CD4-positive, alpha-beta T cell (primary cell): ENCODE measurements at regions of chr6 and their contacts with region 1.

Region 1: DNA sequence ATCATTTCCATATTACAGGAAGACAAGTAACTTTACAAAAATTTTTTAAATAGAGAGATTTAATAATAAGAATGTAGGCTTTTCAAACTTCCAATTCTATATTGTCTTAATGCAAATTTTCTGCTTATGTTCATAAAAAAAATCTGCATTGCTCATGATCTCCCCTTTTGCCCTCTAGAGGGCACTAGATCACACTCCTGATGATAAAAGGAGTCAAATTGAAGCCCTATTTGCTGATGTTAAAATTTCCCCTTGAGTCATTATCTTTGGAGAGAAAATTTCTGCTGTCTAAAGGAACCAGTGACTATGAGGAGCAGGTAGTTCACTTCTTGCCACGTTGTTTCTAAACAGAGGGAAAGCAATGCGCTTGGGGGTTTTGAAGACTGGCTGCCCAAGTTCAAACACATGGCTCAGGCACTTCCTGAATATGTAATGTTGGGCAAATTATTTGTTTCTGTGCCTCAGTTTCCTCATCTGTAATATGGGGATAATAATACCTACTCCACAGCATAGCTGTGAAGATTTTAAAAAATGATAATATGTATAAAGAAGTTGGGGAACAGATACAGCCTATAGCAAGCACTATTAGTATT is 874.2 kb downstream of the TFAP2A start:
- DNase-seq: peak in 2 of 14 experiments; percentile 10 to 18
- ATAC-seq: no peak
- H3K4me3 ChIP-seq: no peak overlapping the region
- H3K4me3 Mint-ChIP-seq: no peak overlapping the region
- H3K27ac ChIP-seq: no peak overlapping the region
- H3K27ac Mint-ChIP-seq: no peak overlapping the region
- H3K4me1 ChIP-seq: no peaks in the 10 kb centered on the region
- H3K4me1 Mint-ChIP-seq: no peaks in the 10 kb centered on the region
- H3K27me3 ChIP-seq: no peaks in the 10 kb centered on the region
- H3K27me3 Mint-ChIP-seq: peaks cover 6% of the 10 kb centered on the region
- CTCF ChIP-seq: peak; percentile 43

Region 2: GRCh38 chr6:10434692-10435376 is 894.2 kb after region 1 on chr6:
- CTCF ChIA-PET with region 1: no interaction called
- POLR2A ChIA-PET with region 1: no interaction called
- intact Hi-C with region 1: loop called (anchors 2 to 10 kb)
- DNase-seq: peak in 3 of 14 experiments; percentile 25 to 57 (median 47)
- ATAC-seq: no peak
- H3K4me3 ChIP-seq: no peak overlapping the region
- H3K4me3 Mint-ChIP-seq: no peak overlapping the region
- H3K27ac ChIP-seq: no peak overlapping the region
- H3K27ac Mint-ChIP-seq: no peak overlapping the region
- H3K4me1 ChIP-seq: peaks cover 4% of the 10 kb centered on the region
- H3K4me1 Mint-ChIP-seq: peaks cover 9% of the 10 kb centered on the region
- H3K27me3 ChIP-seq: peaks cover 0 to 15% of the 10 kb centered on the region in 2 experiments
- H3K27me3 Mint-ChIP-seq: peaks cover 37% of the 10 kb centered on the region
- CTCF ChIP-seq: peak; percentile 56